Activated CD4-positive, alpha-beta T cell treated with anti-CD3 and anti-CD28 coated beads for 36 hours (primary cell): ENCODE measurements at regions of chr5 and their contacts with region 1.

Region 1: DNA sequence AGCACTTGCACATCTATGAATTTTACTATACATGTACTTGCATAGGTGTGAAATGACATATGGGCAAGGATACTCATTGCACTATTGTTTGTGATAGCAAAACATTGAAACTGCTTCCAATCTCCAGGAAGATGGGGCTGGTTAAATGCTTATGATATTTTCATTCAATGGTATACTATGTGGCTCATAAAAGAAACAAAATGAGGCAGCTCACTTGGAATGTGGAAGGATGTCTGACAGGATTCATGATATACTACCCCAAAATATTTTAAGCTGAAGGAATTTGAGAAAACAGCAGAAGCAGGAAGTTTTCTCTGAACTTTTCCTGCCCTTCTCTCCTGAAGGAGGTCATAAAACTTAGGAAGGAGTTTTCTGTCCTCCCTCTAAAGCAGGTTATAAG is 99.6 kb upstream of the CAST start:
- DNase-seq: no peak
- ATAC-seq: no peak
- H3K4me3 Mint-ChIP-seq: no peak overlapping the region
- H3K27ac Mint-ChIP-seq: no peak overlapping the region
- H3K4me1 Mint-ChIP-seq: peaks cover 12% of the 10 kb centered on the region
- H3K27me3 Mint-ChIP-seq: peaks cover 5% of the 10 kb centered on the region

Region 2: DNA sequence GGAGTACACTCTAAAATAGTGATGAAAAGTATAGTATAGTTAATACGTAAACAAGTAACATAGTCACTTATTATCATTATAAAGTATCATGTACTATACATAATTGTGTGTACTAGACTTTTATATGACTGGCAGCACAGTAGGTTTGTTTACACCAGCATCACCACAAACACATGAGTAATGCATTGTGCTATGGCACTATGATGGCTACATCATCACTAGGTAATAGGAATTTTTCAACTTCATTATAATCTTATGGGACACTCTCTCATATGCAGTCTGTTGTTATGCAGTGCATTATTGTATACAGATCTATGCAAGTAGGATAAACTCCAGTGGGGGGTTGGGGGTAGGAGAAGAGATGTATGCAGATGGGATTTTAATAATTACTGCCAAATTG is 548.2 kb before region 1 on chr5:
- CTCF ChIA-PET with region 1: no interaction called
- POLR2A ChIA-PET with region 1: no interaction called
- intact Hi-C with region 1: loop called in 1 of 2 experiments (anchors 5 kb)
- DNase-seq: no peak
- ATAC-seq: no peak
- H3K4me3 Mint-ChIP-seq: no peak overlapping the region
- H3K27ac Mint-ChIP-seq: no peak overlapping the region
- H3K4me1 Mint-ChIP-seq: no peaks in the 10 kb centered on the region
- H3K27me3 Mint-ChIP-seq: no peaks in the 10 kb centered on the region